Activated T-helper 2 cell treated with anti-CD3 and anti-CD28 coated beads, Interferon-gamma antibody, Interleukin-2, Interleukin-4, amounts not matched to agents 10 μg/mL and 5 μg/mL and 100 μg/mL, durations not matched to agents 14 hours and 24 hours and 36 hours (primary cell): ENCODE measurements at regions of chr20 and their contacts with region 1.

Region 1: DNA sequence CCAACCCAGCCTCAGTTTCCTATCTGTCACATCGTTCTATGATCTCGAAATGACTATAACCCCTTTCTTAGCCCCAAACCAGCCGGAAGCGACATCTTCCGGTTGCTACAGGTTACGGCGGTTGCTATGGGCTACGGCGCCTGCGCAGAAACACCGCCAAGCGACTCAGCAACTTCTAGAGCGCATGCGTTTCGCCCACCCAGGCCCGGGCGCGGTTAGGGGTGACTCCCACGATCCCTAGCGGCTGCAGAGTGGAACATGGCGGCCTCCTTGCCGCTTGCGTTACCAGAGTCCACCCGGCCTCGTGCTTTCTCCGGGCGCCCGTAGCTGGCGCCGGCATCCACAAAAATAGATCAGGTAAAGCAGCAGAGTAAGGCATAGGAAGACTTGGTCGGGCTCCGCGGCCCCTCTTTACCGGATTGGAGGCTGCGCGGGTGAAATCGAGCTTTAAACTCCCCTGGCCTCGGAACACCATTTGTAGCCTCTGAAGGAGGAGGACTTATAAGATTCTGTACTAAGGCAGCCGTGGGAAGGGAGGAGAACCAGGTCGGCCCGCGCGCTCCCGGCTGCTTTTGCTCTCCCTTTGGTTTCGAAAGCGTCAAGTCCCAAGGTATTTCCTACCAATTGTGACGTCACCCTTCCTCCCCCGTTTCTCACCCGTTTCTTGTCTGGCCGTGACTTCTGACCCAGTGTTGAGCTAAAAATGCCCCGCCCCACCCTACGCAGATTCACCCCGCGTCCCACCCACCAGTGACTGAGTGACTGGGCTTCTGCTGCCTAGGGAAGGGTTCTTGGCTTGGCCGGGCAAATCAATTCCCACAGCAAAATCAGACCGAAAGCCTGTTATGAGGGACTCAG is 3.5 kb downstream of the SDCBP2 start:
- DNase-seq: peak; percentile 98
- H3K4me3 Mint-ChIP-seq: no peak overlapping the region
- H3K27ac Mint-ChIP-seq: no peak overlapping the region
- H3K4me1 Mint-ChIP-seq: peaks cover 31% of the 10 kb centered on the region
- H3K27me3 Mint-ChIP-seq: no peaks in the 10 kb centered on the region

Region 2: DNA sequence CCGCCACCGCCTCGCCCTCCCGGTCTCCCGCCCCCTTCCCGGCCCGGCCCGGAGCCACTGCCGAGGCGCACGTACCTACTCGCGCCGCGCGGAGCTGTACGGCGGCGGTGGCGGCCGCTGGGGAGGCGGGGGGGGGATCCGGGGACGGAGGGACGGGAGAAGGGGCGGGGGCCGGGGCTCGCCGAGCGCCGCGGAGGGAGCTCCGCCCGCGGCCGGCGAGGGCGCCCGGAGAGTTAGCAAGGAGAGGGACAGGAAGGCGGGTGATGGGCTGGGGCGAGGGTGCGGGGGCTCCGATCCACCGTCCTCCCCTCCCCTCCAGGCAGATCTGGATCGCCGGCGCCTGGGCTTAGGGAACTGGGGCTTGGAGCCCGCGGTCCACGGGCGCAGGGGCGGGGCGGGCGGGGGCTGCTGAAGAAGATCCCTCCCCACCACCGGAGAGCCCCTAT is 140.1 kb before region 1 on chr20:
- intact Hi-C with region 1: no loop called
- DNase-seq: no peak
- H3K4me3 Mint-ChIP-seq: no peak overlapping the region
- H3K27ac Mint-ChIP-seq: no peak overlapping the region
- H3K4me1 Mint-ChIP-seq: peaks cover 8% of the 10 kb centered on the region
- H3K27me3 Mint-ChIP-seq: peaks cover 35% of the 10 kb centered on the region

Region 3: DNA sequence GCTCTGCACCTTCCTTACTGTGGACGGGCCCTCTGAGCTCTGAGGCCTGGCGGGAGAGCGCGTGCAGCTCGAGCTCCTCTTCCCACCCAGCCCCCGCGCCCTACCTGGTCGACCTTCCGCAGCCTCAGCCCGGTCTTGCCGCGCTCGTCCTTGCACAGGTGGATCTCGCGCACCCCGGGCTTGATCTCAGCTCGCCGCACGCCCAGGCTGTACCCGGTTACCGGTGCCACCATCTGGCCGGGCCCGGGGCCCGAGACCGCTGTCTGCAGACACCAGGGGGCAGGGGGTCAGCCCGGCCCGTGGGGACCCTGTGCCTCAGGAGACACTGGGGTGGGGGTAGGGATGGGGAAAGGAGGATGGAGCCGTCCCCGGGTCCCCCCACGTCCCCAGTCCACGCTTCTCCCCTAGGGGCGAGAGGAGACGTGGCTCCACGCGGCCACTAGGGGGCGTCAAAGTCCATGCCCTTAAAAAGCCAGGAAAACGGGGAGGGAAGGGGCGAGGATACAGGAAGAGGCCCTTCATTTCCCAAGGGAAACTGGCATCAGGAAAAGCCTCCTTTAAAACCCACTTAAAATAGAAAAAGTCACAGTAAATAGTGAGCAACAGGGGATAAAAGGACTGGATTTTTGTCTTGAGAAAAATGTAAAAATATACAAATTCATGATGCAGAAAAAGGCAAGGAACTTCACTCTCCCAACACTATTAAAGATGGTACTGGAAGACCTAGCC is 12.0 kb before region 1 on chr20:
- intact Hi-C with region 1: no loop called
- DNase-seq: peak; percentile 38
- H3K4me3 Mint-ChIP-seq: no peak overlapping the region
- H3K27ac Mint-ChIP-seq: no peak overlapping the region
- H3K4me1 Mint-ChIP-seq: peaks cover 14% of the 10 kb centered on the region
- H3K27me3 Mint-ChIP-seq: no peaks in the 10 kb centered on the region

Region 4: GRCh38 chr20:1357921-1358671 is 32.7 kb after region 1 on chr20:
- intact Hi-C with region 1: loop called (anchors 1 kb)
- DNase-seq: peak; percentile 56
- H3K4me3 Mint-ChIP-seq: peak overlapping the region; percentile 55
- H3K27ac Mint-ChIP-seq: peak overlapping the region; percentile 85
- H3K4me1 Mint-ChIP-seq: peaks cover 61% of the 10 kb centered on the region
- H3K27me3 Mint-ChIP-seq: no peaks in the 10 kb centered on the region

Region 5: DNA sequence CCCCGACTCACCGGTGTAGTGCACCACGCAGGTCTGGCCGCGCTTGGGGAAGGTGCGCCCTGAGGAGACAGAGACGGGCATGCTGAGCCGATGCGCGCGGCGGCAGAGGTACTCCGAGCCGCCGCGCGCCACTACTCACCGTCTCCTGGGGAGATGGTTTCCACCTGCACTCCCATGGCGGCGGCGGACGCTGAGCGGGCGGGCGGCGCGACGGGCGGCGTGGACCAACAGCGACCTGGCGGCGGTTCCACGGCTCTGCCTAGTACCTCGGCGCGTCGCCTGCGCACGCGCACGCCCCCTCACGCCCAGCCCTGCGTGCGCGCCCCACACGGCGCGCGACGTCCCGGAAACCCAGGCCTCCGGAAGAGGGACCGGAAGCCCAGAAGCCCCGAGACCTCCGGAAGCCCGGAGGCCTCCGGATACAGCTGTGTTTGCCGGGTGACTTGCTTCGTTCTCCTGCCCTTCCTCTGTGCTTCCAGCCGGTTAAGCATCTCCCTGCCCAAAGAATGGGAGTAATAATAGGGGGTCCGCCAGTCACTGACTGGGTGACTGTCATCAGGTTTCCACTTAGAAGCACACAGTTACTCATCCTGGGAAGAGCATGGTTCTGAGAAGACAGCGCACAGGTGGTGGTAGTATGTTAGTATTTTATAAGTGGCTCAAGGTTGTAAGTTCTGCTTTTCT is 67.6 kb after region 1 on chr20 and contains the start of gene FKBP1A:
- intact Hi-C with region 1: loop called (anchors 1 kb)
- DNase-seq: peak; percentile 88
- H3K4me3 Mint-ChIP-seq: peak within 1 kb of the TSS; percentile 91
- H3K27ac Mint-ChIP-seq: peak within 1 kb of the TSS; percentile 85
- H3K4me1 Mint-ChIP-seq: peaks cover 53% of the 10 kb centered on the region
- H3K27me3 Mint-ChIP-seq: peaks cover 18% of the 10 kb centered on the region
- total RNA-seq, gene FKBP1A: 320 and 330 TPM in 2 replicates

Region 6: GRCh38 chr20:1405801-1406200 is 80.4 kb after region 1 on chr20:
- intact Hi-C with region 1: no loop called
- DNase-seq: no peak
- H3K4me3 Mint-ChIP-seq: no peak overlapping the region
- H3K27ac Mint-ChIP-seq: no peak overlapping the region
- H3K4me1 Mint-ChIP-seq: peaks cover 9% of the 10 kb centered on the region
- H3K27me3 Mint-ChIP-seq: peaks cover 23% of the 10 kb centered on the region

Region 7: DNA sequence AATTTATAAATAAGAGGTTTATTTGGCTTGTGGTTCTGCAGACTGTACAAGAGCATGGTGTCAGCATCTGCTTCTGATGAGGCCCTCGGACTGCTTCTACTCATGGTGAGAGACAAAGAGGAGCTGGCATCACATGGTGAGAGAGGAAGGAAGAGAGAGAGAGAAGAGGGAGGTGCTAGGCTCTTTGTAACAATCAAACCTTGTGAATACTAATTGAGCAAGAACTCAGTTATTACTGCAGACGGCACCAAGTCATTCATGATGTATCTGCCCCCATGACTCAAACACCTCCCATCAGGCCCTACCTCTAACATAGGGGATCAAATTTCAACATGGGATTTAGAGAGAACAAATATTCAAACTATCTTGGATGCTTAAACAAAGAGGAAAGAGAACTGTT is 338.5 kb after region 1 on chr20:
- intact Hi-C with region 1: loop called (anchors 10 kb)
- DNase-seq: no peak
- H3K4me3 Mint-ChIP-seq: peak overlapping the region; percentile 11
- H3K27ac Mint-ChIP-seq: peak overlapping the region; percentile 79
- H3K4me1 Mint-ChIP-seq: peaks cover 82% of the 10 kb centered on the region
- H3K27me3 Mint-ChIP-seq: no peaks in the 10 kb centered on the region

Region 8: DNA sequence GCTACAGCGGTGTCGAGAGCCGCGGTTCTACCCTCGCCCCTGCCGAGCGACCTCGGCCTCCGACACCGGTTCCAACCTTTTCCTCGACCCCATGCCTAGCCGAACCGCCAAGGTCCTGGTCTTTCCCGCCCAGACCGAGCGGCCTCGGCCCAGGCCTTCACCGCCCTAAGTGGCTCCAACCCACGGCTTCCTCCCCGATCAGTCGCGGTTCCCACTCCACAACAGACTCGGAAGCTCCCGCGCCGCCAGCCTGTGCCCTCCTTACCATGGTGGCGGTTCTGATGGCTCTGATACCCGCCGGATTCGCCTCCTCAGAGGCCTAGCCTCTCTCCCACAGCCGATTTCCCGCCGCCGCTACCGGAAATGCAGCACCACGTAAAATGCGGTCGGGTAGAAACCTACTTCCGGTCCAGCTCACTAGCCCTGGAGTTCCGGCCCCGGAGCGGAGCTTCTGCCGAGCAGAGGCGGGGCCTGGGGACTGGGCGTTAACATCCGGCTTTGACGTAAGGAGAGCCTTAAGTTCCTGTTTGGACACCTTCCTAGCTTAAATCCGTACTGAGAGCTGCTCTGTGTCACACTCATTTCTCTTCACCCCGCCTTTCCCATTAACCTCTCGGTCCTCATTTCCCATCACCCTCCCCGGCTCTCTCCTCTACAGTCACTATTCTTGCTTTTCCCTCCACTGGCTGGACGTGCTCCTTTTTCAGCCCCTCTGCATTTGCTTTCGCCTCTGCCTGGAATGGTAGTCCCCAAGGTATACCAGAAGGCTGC is 1145.2 kb after region 1 on chr20 and contains the start of gene SNRPB:
- intact Hi-C with region 1: loop called (anchors 2 kb)
- DNase-seq: peak; percentile 97
- H3K4me3 Mint-ChIP-seq: peak within 1 kb of the TSS; percentile 92
- H3K27ac Mint-ChIP-seq: peak within 1 kb of the TSS; percentile 100
- H3K4me1 Mint-ChIP-seq: peaks cover 47% of the 10 kb centered on the region
- H3K27me3 Mint-ChIP-seq: no peaks in the 10 kb centered on the region
- total RNA-seq, gene SNRPB: 506 and 513 TPM in 2 replicates